Right cardiac atrium (tissue), 5 donors: ENCODE measurements at regions of chrX and their contacts with region 1.

Region 1: DNA sequence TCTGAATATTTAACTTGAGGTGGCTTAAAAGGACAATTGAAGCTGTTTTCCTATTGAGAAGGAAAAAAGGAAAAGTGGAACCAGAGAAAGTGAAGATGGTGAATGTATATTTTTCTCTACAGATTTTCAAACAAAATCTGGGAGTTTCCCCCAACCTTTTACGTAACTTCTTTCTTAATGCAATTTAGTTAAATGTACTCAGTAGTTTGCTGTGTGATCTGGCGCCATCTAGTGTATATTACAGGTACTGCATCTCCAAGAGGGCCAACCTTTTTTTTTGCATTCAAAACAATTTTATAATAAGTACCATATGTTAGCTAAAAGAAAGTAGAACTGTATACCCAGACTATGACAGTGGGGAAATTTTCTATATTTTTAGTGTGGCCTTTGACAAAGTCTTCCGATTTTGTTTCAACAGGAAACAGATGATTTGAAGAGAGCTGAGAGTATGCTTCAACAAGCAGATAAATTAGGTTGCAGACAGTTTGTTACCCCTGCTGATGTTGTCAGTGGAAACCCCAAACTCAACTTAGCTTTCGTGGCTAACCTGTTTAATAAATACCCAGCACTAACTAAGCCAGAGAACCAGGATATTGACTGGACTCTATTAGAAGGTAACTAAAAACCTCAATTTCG is 82.0 kb downstream of the PLS3 start:
- DNase-seq: no peak
- ATAC-seq: no peak
- H3K4me3 ChIP-seq: no peak overlapping the region
- H3K27ac ChIP-seq: no peak overlapping the region
- H3K4me1 ChIP-seq: peaks cover 2% of the 10 kb centered on the region
- H3K27me3 ChIP-seq: no peaks in the 10 kb centered on the region

Region 2: GRCh38 chrX:115324194-115324593 is 318.8 kb before region 1 on chrX:
- intact Hi-C with region 1: loop called in 1 of 4 experiments (anchors 10 kb)
- DNase-seq: peak; percentile 39 to 83 (median 75)
- ATAC-seq: no peak
- H3K4me3 ChIP-seq: no peak overlapping the region
- H3K27ac ChIP-seq: no peak overlapping the region
- H3K4me1 ChIP-seq: no peaks in the 10 kb centered on the region
- H3K27me3 ChIP-seq: no peaks in the 10 kb centered on the region

Region 3: DNA sequence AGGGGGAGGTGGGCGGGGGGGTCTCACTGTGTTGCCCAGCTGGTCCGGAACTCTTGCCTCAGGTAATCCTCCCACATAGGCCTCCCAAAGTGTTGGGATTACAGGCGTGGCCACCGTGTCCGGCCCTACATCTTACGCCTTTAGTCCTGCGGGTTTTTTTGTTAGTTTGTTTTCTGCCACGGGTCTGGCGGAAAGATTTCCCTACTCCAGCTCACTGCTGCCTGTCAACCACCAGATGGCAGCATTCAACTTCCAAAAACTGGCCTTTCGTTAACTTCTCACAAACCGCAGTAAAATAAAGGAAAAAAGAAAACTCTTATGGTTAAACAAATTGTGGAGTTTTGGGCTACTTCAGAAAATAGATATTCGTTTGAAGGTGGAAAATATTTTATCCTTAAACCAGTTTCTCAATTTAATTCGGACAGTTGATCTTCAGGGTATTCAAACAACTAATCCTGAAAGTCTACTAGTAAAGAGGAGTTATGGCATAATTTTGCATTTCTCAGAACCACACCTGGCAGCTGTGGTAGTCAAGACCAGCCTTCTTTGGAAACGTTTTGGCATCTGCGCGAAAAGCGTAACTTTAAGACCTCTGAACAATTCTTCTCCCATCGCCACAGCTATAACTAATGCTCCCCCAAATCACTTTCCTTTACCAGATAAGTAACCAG is 312.4 kb before region 1 on chrX:
- intact Hi-C with region 1: loop called (anchors 5 to 10 kb)
- DNase-seq: peak in 1 of 3 donors; percentile 29
- ATAC-seq: peak; percentile 51 to 58
- H3K4me3 ChIP-seq: peak overlapping the region; percentile 29
- H3K27ac ChIP-seq: no peak overlapping the region
- H3K4me1 ChIP-seq: no peaks in the 10 kb centered on the region
- H3K27me3 ChIP-seq: no peaks in the 10 kb centered on the region

Region 4: GRCh38 chrX:115573185-115573584 is 69.8 kb before region 1 on chrX:
- intact Hi-C with region 1: loop called in 2 of 4 experiments (anchors 10 kb)
- DNase-seq: no peak
- ATAC-seq: peak in 1 of 2 donors; percentile 50
- H3K4me3 ChIP-seq: no peak overlapping the region
- H3K27ac ChIP-seq: no peak overlapping the region
- H3K4me1 ChIP-seq: no peaks in the 10 kb centered on the region
- H3K27me3 ChIP-seq: no peaks in the 10 kb centered on the region